ENCODE measurements at regions of chr7 and their contacts with region 1.

Region 1: GRCh38 chr7:140517546-140518369 is 38.5 kb upstream of the MKRN1 start:
- DNase-seq: peak; percentile 94
- H3K4me3 ChIP-seq: no peak overlapping the region; a peak in 1 of 4 replicates
- H3K27ac ChIP-seq: no peak overlapping the region
- H3K4me1 ChIP-seq: peaks cover 0 to 3% of the 10 kb centered on the region in 2 experiments; a peak in 1 of 4 replicates
- H3K27me3 ChIP-seq: no peaks in the 10 kb centered on the region
- CTCF ChIP-seq: peak; percentile 95
- EP300 ChIP-seq: no peak
- RAD21 ChIP-seq: peak; percentile 99

Region 2: GRCh38 chr7:139620676-139621344 is 896.9 kb before region 1 on chr7:
- CTCF ChIA-PET with region 1: no interaction called
- POLR2A ChIA-PET with region 1: no interaction called
- DNase-seq: peak; percentile 67
- H3K4me3 ChIP-seq: no peak overlapping the region
- H3K27ac ChIP-seq: no peak overlapping the region
- H3K4me1 ChIP-seq: no peaks in the 10 kb centered on the region
- H3K27me3 ChIP-seq: no peaks in the 10 kb centered on the region
- CTCF ChIP-seq: peak; percentile 76
- EP300 ChIP-seq: no peak
- RAD21 ChIP-seq: peak; percentile 79

Region 3: DNA sequence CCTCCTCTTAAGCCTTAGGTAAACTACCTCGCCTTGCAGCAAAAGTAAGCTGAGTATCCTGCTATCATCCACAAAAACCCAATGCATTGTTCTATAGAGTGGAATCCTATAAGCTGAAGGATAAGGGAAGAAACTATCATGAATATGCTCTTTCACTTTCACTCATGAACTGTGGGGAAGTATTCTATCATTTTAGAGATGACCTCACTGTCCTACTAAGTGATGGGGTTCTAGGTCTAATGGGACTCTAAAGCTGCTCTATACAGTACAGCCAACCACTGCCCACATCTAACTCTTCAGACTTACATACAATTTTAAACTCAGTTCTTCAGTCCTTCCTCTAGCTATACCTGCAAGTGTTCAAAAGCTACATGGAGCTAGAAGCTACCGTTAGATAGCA is 54.6 kb before region 1 on chr7:
- CTCF ChIA-PET with region 1: no interaction called
- POLR2A ChIA-PET with region 1: no interaction called
- DNase-seq: no peak
- H3K4me3 ChIP-seq: no peak overlapping the region
- H3K27ac ChIP-seq: no peak overlapping the region
- H3K4me1 ChIP-seq: no peaks in the 10 kb centered on the region; a peak in 1 of 4 replicates
- H3K27me3 ChIP-seq: no peaks in the 10 kb centered on the region
- CTCF ChIP-seq: no peak
- EP300 ChIP-seq: no peak
- RAD21 ChIP-seq: no peak

Region 4: GRCh38 chr7:140506788-140507464 is 10.8 kb before region 1 on chr7:
- CTCF ChIA-PET with region 1: interaction called, 39 read pairs
- POLR2A ChIA-PET with region 1: interaction called, 3 read pairs
- DNase-seq: no peak
- H3K4me3 ChIP-seq: no peak overlapping the region; a peak in 1 of 4 replicates
- H3K27ac ChIP-seq: peak overlapping the region in 1 of 2 experiments; percentile 40; a peak in 1 of 4 replicates
- H3K4me1 ChIP-seq: peaks cover 3 to 12% of the 10 kb centered on the region in 2 experiments; a peak in 1 of 4 replicates
- H3K27me3 ChIP-seq: no peaks in the 10 kb centered on the region
- CTCF ChIP-seq: 0 out of 2 replicates have a peak, but pooled peaks have one; percentile 15
- EP300 ChIP-seq: no peak
- RAD21 ChIP-seq: peak; percentile 47

Region 5: DNA sequence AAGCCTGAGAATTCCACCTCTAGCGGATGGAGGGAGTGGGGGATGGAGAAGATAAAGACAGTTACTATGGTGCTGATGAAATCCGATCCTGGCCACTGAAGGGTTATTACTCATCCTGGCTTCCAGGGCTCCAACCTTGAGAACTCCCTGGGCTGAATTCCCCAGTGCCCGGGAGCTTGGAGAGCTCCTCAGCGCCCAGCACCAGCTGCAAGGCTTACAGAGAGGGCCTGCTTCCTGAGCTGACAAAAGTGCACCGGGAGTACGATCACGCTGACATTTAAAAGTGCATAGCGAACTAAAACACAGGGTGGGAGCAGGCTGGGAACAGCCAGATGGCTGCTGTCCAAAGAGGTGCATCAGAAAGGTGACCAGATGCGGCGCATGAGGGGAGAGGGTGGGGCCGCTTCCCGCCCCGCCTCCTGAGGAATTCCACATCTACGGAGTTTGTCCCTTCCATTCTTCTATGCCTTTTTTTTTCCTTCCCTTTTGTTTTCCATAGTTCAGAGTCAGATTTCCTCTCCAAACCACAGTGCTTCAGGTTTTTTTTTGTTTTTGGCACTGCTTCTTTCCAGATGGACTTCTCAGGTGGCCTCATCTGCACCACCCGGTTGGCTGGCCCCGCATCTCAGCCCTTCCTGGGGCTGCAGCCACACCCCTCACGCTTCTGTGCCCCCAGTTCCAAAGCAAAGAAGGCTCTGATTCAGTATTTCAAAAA is 23.9 kb after region 1 on chr7:
- CTCF ChIA-PET with region 1: interaction called, 39 read pairs
- POLR2A ChIA-PET with region 1: no interaction called
- DNase-seq: peak; percentile 61
- H3K4me3 ChIP-seq: peak overlapping the region; percentile 19 to 31; a peak in 1 of 4 replicates
- H3K27ac ChIP-seq: peak overlapping the region; percentile 58 to 88
- H3K4me1 ChIP-seq: peaks cover 8 to 20% of the 10 kb centered on the region in 2 experiments; a peak in 3 of 4 replicates
- H3K27me3 ChIP-seq: no peaks in the 10 kb centered on the region
- CTCF ChIP-seq: no peak
- EP300 ChIP-seq: peak in 1 of 2 experiments; percentile 87; a peak in 1 of 4 replicates
- RAD21 ChIP-seq: no peak

Region 6: DNA sequence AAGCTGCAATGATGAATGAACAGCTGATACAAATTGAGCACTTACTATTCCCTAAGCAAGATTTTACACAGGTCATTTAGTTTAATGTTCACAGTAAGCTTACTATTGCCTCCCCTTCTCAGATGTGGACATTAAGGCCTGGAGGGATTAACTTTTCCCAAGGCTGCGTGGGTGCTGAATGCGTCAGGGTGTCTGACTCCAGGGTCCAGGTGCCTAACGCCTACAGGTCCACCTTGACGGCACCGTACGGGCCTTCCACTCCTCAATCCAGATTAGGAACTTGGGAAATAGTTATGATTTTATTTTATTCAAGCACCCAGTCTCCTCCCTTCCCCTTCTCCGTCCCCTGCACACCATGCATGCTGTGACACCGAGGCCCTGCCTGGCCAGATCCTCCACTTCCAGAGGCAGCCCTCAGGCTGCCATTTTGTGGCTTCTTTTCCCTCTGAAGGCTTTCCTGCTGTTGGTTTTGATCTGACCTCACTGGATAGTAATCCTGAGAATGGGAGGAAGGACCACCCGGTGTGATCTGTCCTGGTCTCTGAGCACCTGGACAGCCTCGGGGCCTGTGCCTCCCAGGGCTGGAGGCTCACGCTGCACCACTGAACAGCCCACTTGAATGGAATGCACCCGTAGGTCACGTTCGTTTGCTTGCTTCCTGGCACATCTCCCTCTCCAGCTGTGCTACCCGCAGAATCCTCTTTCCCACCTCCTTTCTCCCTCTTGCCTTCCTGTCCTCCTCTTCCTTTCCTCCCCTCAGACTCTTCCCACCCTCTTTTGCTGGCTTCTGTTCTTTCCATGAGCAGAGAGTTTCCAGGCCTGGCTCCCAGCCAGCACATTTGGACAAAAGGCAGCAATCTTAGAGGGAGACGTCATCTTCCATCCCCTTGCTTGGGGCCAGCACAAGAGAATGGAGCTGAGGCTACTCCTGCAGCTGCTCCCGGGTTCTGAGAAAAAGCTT is 108.4 kb after region 1 on chr7:
- CTCF ChIA-PET with region 1: interaction called, 11 read pairs
- POLR2A ChIA-PET with region 1: no interaction called
- DNase-seq: peak; percentile 69
- H3K4me3 ChIP-seq: no peak overlapping the region
- H3K27ac ChIP-seq: peak overlapping the region; percentile 30 to 66; a peak in 3 of 4 replicates
- H3K4me1 ChIP-seq: peaks cover 4 to 15% of the 10 kb centered on the region in 2 experiments; a peak in 2 of 4 replicates
- H3K27me3 ChIP-seq: no peaks in the 10 kb centered on the region
- CTCF ChIP-seq: no peak
- EP300 ChIP-seq: peak in 1 of 2 experiments; percentile 37; a peak in 1 of 4 replicates
- RAD21 ChIP-seq: no peak

Region 7: DNA sequence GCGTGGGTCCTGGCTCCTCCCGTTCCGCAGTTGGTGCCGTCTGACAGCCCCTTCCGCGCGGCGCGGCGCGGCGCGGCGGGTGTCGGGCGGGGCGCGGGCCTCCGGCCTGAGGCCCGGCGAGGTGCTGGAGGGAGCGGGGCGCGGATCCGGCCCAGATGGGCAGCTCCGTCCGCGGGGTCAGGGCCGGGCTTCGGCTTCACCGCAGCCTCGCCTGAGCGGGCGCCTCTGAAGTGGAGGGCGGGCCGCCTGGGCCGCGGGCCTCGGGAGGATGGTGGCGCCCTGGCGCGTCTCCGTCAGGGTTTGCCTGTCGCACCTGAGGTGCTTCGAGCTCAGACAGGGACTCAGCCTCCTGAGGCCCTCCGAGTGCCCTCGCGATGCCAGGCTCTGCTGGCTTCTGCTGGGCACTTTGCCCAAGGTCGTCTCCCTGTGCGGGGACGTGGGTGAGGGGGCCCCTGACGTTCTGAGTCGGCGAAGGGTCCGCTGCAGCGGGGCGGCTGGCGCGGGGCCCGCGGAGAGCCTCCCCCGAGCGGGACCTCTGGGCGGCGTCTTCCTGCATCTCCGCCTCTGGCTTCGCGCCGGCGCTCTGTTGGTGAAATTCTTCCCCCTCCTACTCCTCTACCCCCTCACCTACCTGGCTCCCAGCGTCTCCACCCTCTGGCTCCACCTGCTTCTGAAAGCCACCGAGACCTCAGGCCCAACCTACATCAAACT is 155.5 kb after region 1 on chr7:
- CTCF ChIA-PET with region 1: interaction called, 20 read pairs
- POLR2A ChIA-PET with region 1: no interaction called
- DNase-seq: peak; percentile 89
- H3K4me3 ChIP-seq: peak overlapping the region; percentile 64 to 74
- H3K27ac ChIP-seq: 0 out of 4 replicates have a peak overlapping the region, but pooled peaks of 1 of the 2 experiments have one; percentile 18
- H3K4me1 ChIP-seq: peaks cover 7 to 20% of the 10 kb centered on the region in 2 experiments; a peak in 2 of 4 replicates
- H3K27me3 ChIP-seq: no peaks in the 10 kb centered on the region
- CTCF ChIP-seq: no peak
- EP300 ChIP-seq: no peak
- RAD21 ChIP-seq: no peak